ENCODE measurements at regions of chr16 and their contacts with region 1.

Region 1: GRCh38 chr16:50665128-50665878 is 15.8 kb downstream of the SNX20 start:
- DNase-seq: peak; percentile 59
- ATAC-seq: peak; percentile 69
- H3K4me3 ChIP-seq: peak overlapping the region; percentile 57 to 76 (median 69)
- H3K27ac ChIP-seq: no peak overlapping the region
- H3K4me1 ChIP-seq: peaks cover 39% of the 10 kb centered on the region
- H3K27me3 ChIP-seq: no peaks in the 10 kb centered on the region
- CTCF ChIP-seq: peak; percentile 91
- EP300 ChIP-seq: no peak
- POLR2A ChIP-seq: 0 out of 4 replicates have a peak, but pooled peaks of 1 of the 2 experiments have one; percentile 15
- RAD21 ChIP-seq: peak; percentile 92

Region 2: GRCh38 chr16:50245417-50246298 is 419.6 kb before region 1 on chr16:
- CTCF ChIA-PET with region 1: no interaction called
- POLR2A ChIA-PET with region 1: no interaction called
- in situ Hi-C with region 1: no loop called
- intact Hi-C with region 1: loop called (anchors 10 kb)
- DNase-seq: peak; percentile 16
- ATAC-seq: peak; percentile 67
- H3K4me3 ChIP-seq: peak overlapping the region; percentile 79 to 85 (median 81)
- H3K27ac ChIP-seq: no peak overlapping the region
- H3K4me1 ChIP-seq: peaks cover 25% of the 10 kb centered on the region
- H3K27me3 ChIP-seq: peaks cover 0 to 29% of the 10 kb centered on the region in 2 experiments; a peak in 4 of 5 replicates
- CTCF ChIP-seq: peak; percentile 37; the same call in 1 of the 2 replicates
- EP300 ChIP-seq: no peak
- POLR2A ChIP-seq: no peak
- RAD21 ChIP-seq: peak; percentile 36; the same call in 1 of the 2 replicates

Region 3: DNA sequence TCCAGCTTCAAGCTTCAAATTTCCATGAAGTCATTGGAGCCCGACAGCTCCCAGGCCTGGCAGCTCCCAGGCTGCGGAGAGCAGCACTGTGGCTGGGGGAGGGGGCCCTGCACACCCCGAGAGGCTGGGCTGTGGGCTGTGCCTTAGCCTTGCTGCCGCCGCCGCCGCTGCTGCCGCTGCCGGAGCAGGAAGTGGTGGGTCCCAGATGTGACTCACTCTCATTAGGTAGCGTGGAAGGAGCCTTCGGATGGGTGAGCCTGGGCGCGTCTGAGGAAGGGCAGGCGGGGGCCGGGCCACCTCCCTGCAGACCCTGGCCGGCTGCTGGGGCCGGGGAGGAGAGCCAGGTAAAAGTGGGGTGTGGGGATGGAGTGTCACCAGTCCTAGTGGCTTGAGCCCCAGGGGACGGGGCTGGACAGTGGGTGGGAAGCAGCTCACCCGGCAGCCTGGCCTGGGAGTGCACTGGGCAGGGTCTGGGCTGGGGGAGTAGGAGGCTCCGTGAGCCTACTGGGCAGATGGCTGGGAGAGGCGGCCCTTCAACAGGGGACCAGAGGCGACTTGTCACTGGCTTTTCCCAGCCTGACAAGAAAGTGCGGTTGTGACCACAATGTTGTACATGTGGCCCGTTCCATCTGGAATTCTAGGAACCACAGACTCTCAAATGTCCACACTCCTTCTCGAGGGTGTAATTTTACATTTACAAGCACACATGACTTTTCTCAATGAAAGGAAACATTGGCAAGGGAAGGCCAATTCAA is 398.8 kb before region 1 on chr16 and contains the start of gene ADCY7:
- CTCF ChIA-PET with region 1: no interaction called
- POLR2A ChIA-PET with region 1: no interaction called
- in situ Hi-C with region 1: loop called (anchors 10 kb)
- intact Hi-C with region 1: no loop called
- DNase-seq: no peak
- ATAC-seq: no peak
- H3K4me3 ChIP-seq: no peak within 1 kb of the TSS
- H3K27ac ChIP-seq: no peak within 1 kb of the TSS
- H3K4me1 ChIP-seq: peaks cover 67% of the 10 kb centered on the region
- H3K27me3 ChIP-seq: peaks cover 3 to 11% of the 10 kb centered on the region in 2 experiments
- CTCF ChIP-seq: no peak
- EP300 ChIP-seq: no peak
- POLR2A ChIP-seq: no peak
- RAD21 ChIP-seq: no peak
- total RNA-seq, gene ADCY7: 2.3 and 4.3 TPM in 2 replicates

Region 4: DNA sequence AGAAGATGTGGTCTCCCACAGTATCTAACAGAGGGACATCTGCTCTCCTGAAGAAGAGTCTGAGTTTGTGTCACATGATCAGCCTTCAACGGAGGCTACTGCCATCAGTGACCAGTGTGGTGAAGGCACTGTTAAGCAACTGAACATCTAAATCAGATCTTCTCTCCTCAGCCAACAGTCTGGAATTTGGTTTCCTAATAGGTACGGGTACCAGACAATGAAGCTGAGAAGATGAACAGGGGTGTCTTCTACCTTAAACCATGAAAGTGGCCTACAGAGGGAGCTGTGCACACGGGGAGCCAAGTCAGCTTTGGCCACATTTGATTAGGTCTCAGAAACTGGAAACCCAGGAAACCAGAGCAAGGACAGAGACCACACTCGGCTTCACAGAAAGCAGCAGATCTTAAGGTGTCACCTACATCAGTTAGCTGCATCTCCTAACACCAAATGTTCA is 338.3 kb before region 1 on chr16:
- CTCF ChIA-PET with region 1: no interaction called
- POLR2A ChIA-PET with region 1: no interaction called
- in situ Hi-C with region 1: no loop called
- intact Hi-C with region 1: loop called (anchors 5 kb)
- DNase-seq: no peak
- ATAC-seq: peak; percentile 77
- H3K4me3 ChIP-seq: no peak overlapping the region
- H3K27ac ChIP-seq: no peak overlapping the region
- H3K4me1 ChIP-seq: peaks cover 16% of the 10 kb centered on the region
- H3K27me3 ChIP-seq: no peaks in the 10 kb centered on the region
- CTCF ChIP-seq: peak; percentile 62
- EP300 ChIP-seq: no peak
- POLR2A ChIP-seq: no peak
- RAD21 ChIP-seq: no peak; the same call in 1 of the 2 replicates

Region 5: GRCh38 chr16:50741808-50742575 is 76.7 kb after region 1 on chr16 and contains the start of gene CYLD:
- CTCF ChIA-PET with region 1: interaction called, 9 read pairs
- POLR2A ChIA-PET with region 1: interaction called, 3 read pairs
- in situ Hi-C with region 1: no loop called
- intact Hi-C with region 1: loop called (anchors 5 kb)
- DNase-seq: peak; percentile 99
- ATAC-seq: peak; percentile 98
- H3K4me3 ChIP-seq: peak within 1 kb of the TSS; percentile 77 to 94 (median 86)
- H3K27ac ChIP-seq: no peak within 1 kb of the TSS
- H3K4me1 ChIP-seq: peaks cover 19% of the 10 kb centered on the region
- H3K27me3 ChIP-seq: 0 out of 5 replicates have a peak, but pooled peaks cover 0 to 5% of the 10 kb centered on the region in 2 experiments
- CTCF ChIP-seq: no peak
- EP300 ChIP-seq: no peak
- POLR2A ChIP-seq: no peak; a peak in 1 of 4 replicates
- RAD21 ChIP-seq: 0 out of 2 replicates have a peak, but pooled peaks have one; percentile 26
- total RNA-seq, gene CYLD: 11.4 and 16.0 TPM in 2 replicates